Activated T-helper 1 cell treated with anti-CD3 and anti-CD28 coated beads, Interleukin-12 subunit alpha, Interleukin-12 subunit beta, Interleukin-2, Interleukin-4 antibody, amounts not matched to agents 30 ng/mL and 10 ng/mL and 1 ng/mL, durations not matched to agents 14 hours and 24 hours and 36 hours (primary cell): ENCODE measurements at regions of chr11 and their contacts with region 1.

Region 1: GRCh38 chr11:69704508-69705253 is 859 bp upstream of the FGF19 start:
- DNase-seq: no peak
- H3K4me3 Mint-ChIP-seq: no peak overlapping the region
- H3K27ac Mint-ChIP-seq: peak overlapping the region; percentile 40
- H3K4me1 Mint-ChIP-seq: no peaks in the 10 kb centered on the region
- H3K27me3 Mint-ChIP-seq: peaks cover 65% of the 10 kb centered on the region

Region 2: DNA sequence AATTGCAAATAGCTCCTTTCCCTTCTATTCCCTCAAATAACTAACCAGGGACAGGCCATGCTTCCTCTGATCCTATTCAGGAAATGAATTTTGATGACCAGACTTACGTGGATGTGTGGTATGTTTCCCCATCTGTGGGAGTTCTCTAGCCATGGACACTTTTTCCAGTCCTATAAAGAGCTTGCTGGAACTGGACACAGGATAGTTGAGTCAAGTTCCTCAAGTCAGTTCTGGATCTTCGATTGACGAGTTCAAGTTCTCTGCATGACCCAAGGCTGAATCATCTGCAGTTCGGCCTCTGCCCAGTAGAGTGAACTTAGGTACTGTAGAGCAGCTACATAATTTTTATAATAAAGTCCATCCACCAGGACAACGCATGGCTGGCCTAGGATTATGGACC is 116.4 kb before region 1 on chr11:
- intact Hi-C with region 1: no loop called
- DNase-seq: no peak
- H3K4me3 Mint-ChIP-seq: no peak overlapping the region
- H3K27ac Mint-ChIP-seq: no peak overlapping the region
- H3K4me1 Mint-ChIP-seq: no peaks in the 10 kb centered on the region
- H3K27me3 Mint-ChIP-seq: peaks cover 7% of the 10 kb centered on the region

Region 3: GRCh38 chr11:69775163-69775755 is 70.6 kb after region 1 on chr11 and contains the start of gene FGF4:
- intact Hi-C with region 1: loop called (anchors 5 kb)
- DNase-seq: no peak
- H3K4me3 Mint-ChIP-seq: no peak within 1 kb of the TSS
- H3K27ac Mint-ChIP-seq: no peak within 1 kb of the TSS
- H3K4me1 Mint-ChIP-seq: no peaks in the 10 kb centered on the region
- H3K27me3 Mint-ChIP-seq: peaks cover 26% of the 10 kb centered on the region
- total RNA-seq, gene FGF4: not detected in 2 replicates

Region 4: GRCh38 chr11:69817265-69818230 is 112.9 kb after region 1 on chr11:
- intact Hi-C with region 1: loop called (anchors 2 kb)
- DNase-seq: no peak
- H3K4me3 Mint-ChIP-seq: no peak overlapping the region
- H3K27ac Mint-ChIP-seq: no peak overlapping the region
- H3K4me1 Mint-ChIP-seq: no peaks in the 10 kb centered on the region
- H3K27me3 Mint-ChIP-seq: peaks cover 24% of the 10 kb centered on the region